Left ventricle myocardium inferior (tissue), 1 donor: ENCODE measurements at regions of chr18 and their contacts with region 1.

Region 1: DNA sequence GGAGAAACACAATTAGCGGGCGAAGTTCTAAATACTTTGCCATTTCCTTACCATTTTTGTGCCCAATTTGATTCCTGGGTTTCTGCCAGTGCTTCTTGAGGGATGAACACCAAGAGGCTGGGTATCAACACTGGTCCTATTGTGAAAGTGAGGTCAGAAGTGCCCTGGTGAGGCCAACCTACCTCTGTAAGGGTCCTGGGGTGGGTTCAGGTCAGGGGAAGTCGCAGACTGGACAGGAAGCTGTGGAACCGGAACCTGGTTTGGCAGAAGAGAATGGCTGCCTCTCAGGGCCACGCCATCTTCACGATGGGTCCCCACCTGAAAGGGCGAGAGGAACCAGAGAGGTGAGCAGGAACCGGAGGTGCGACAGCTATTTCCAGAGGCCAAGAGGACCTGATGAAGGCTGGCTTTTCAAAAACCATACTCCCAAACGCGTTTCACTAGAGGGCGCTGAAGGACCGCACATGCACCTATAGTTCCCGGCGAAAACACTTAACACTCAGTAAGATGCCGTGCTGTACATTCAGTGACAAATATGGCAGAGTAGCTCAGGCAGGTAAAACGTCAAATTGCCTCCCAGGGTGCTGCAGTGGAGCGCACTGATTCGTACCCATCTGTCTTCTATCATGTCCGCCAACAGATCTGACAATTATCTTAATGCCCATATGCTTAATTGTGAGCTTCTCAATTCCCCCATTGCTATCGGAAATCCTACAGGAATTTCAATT is 275.3 kb upstream of the CCDC68 start:
- DNase-seq: peak; percentile 73
- H3K4me3 ChIP-seq: peak overlapping the region; percentile 33
- H3K27ac ChIP-seq: peak overlapping the region; percentile 88
- H3K4me1 ChIP-seq: peaks cover 64% of the 10 kb centered on the region
- H3K27me3 ChIP-seq: no peaks in the 10 kb centered on the region
- CTCF ChIP-seq: peak; percentile 83

Region 2: GRCh38 chr18:55096261-55096951 is 138.1 kb before region 1 on chr18:
- intact Hi-C with region 1: loop called (anchors 10 kb)
- DNase-seq: no peak
- H3K4me3 ChIP-seq: no peak overlapping the region
- H3K27ac ChIP-seq: peak overlapping the region; percentile 30
- H3K4me1 ChIP-seq: peaks cover 9% of the 10 kb centered on the region
- H3K27me3 ChIP-seq: no peaks in the 10 kb centered on the region
- CTCF ChIP-seq: peak; percentile 56

Region 3: DNA sequence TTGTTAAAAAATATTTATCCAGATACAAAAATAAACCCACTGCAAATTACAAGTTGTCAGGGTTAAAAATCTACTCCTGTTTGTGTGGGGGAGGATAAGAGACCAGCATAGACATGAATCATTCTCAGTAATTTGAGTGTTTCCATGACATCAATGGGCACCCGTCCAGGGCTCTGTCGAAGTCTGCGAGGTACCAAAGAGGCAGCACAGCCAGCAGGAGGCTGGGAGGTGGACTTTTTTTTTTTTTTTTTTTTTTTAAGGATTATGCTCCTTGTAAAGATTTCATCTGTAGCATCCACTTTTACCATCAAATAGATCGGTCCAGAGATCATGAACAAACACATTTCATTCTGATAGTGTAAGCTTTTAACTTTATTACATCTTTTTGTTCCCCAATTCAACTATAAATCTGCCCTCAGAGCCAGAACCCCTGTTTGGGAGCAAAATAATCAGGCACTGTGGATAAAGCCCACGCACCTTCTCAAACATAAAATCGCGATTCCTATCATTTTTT is 171.4 kb after region 1 on chr18:
- intact Hi-C with region 1: loop called (anchors 10 kb)
- DNase-seq: peak; percentile 87
- H3K4me3 ChIP-seq: peak overlapping the region; percentile 24
- H3K27ac ChIP-seq: peak overlapping the region; percentile 81
- H3K4me1 ChIP-seq: peaks cover 49% of the 10 kb centered on the region
- H3K27me3 ChIP-seq: no peaks in the 10 kb centered on the region
- CTCF ChIP-seq: peak; percentile 42

Region 4: DNA sequence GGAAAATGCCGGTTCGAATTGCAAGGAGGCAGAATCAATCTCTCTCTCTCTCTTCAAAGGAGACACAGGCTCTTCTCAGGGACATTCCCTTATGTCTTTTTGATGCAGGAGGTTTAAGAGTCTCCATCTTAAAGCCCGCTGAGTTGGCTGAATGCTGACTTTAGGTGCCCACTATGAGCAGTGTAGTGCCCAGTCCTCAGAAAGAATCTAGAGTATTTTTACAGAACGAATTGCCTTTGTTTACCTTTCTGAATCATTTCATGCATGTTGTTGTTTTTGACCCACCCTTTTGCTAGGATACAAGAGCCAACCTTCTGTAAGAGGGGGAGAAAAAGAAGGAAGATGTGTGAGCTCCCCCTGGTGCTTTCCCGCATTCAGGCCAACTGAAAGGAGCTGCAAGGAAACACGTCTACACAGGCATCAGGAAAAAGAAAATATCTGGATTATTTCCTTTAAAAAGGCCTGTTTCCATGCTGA is 547.0 kb after region 1 on chr18:
- intact Hi-C with region 1: loop called (anchors 5 kb)
- DNase-seq: peak; percentile 35
- H3K4me3 ChIP-seq: no peak overlapping the region
- H3K27ac ChIP-seq: peak overlapping the region; percentile 94
- H3K4me1 ChIP-seq: peaks cover 44% of the 10 kb centered on the region
- H3K27me3 ChIP-seq: no peaks in the 10 kb centered on the region
- CTCF ChIP-seq: peak; percentile 75